Endothelial cell of umbilical vein (primary cell): ENCODE measurements at regions of chr13 and their contacts with region 1.

Region 1: DNA sequence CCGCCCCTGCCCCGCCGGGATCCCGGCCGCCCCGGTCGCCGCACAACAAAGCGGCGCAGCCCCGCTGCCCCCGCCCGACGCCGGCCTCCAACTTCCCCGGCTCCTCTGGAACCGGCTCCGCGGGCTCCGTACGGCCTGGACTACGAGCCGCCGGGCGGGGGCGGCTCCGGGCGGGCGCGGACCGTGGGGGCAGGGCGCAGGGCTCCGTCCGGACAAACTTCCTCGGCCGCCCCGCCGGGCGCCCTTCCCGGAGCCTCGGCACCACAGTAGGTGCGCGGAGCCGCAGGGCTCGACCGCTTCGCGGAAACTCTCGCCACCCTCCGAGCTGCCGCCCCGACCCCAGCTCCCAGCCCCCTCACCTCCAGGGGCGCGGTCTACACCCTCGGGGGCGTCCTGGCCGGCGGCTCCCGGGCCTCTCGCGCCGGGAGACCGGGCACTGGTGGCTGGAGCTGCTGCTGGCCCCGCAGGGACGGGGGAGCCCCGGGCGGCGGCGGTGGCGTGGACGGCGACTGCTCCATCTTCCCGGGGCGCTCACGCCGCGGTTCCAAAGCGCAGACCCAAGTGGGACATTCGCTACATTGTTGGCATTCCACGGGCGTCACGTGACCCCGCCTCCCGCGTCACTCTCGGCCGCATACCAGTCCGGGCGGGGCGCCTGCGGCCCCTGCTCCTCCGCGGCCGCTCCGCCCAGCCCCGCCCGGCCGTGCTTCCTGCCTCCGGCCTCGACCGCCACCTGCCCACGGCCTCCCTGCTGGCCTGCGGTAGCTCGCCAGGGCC is at the start of gene LATS2:
- DNase-seq: peak; percentile 93
- H3K4me3 ChIP-seq: peak within 1 kb of the TSS; percentile 93 to 99 (median 97)
- H3K27ac ChIP-seq: peak within 1 kb of the TSS; percentile 94
- H3K4me1 ChIP-seq: peaks cover 36% of the 10 kb centered on the region
- H3K27me3 ChIP-seq: no peaks in the 10 kb centered on the region
- CTCF ChIP-seq: no peak
- POLR2A ChIP-seq: peak; percentile 90
- total RNA-seq, gene LATS2: 65.7 and 67.6 TPM in 2 replicates

Region 2: GRCh38 chr13:20773194-20774080 is 287.7 kb before region 1 on chr13 and contains the start of gene EEF1AKMT1:
- CTCF ChIA-PET with region 1: no interaction called
- POLR2A ChIA-PET with region 1: no interaction called
- dilution Hi-C with region 1: no loop called
- intact Hi-C with region 1: loop called (anchors 10 kb)
- DNase-seq: peak; percentile 91
- H3K4me3 ChIP-seq: peak within 1 kb of the TSS; percentile 13 to 60 (median 35)
- H3K27ac ChIP-seq: peak within 1 kb of the TSS; percentile 88
- H3K4me1 ChIP-seq: peaks cover 18% of the 10 kb centered on the region
- H3K27me3 ChIP-seq: no peaks in the 10 kb centered on the region
- CTCF ChIP-seq: no peak
- POLR2A ChIP-seq: peak; percentile 56
- total RNA-seq, gene EEF1AKMT1: 8.7 and 11.1 TPM in 2 replicates

Region 3: GRCh38 chr13:20969182-20969581 is 92.0 kb before region 1 on chr13:
- CTCF ChIA-PET with region 1: no interaction called
- POLR2A ChIA-PET with region 1: interaction called, 11 read pairs
- dilution Hi-C with region 1: no loop called
- intact Hi-C with region 1: no loop called
- DNase-seq: peak; percentile 39
- H3K4me3 ChIP-seq: no peak overlapping the region
- H3K27ac ChIP-seq: no peak overlapping the region
- H3K4me1 ChIP-seq: no peaks in the 10 kb centered on the region
- H3K27me3 ChIP-seq: peaks cover 0 to under 1% of the 10 kb centered on the region in 2 experiments
- CTCF ChIP-seq: no peak
- POLR2A ChIP-seq: no peak

Region 4: DNA sequence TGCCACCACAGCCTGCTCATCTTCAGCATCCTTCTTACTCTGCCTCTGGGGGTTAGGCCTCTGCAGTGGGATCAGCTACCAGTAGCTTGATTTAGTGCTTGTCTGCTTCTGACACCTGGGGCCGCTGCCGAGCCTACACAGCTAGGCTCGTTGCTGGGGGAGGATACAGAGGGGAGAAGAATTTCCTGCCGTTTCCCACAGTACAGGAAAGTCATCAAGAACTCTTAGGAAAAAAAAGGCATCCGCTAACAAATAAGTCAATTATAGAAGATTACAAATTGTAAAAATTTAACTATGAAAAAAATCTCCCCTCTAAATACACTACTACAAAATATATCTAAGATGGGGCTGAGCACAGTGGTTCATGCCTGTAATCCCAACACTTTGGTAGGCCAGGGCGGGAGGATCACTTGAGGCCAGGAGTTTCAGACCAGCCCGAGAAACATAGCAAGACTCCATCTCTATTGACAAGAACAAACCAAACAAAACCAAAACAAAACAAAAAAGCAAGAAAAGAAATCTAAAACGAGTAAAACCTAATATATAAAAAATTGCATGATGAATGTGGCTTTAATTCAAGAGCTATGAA is 26.5 kb before region 1 on chr13:
- CTCF ChIA-PET with region 1: interaction called, 22 read pairs
- POLR2A ChIA-PET with region 1: interaction called, 3 read pairs
- dilution Hi-C with region 1: no loop called
- intact Hi-C with region 1: loop called (anchors 1 kb)
- DNase-seq: peak; percentile 71
- H3K4me3 ChIP-seq: no peak overlapping the region
- H3K27ac ChIP-seq: peak overlapping the region; percentile 12
- H3K4me1 ChIP-seq: peaks cover 66% of the 10 kb centered on the region
- H3K27me3 ChIP-seq: no peaks in the 10 kb centered on the region
- CTCF ChIP-seq: peak; percentile 23 to 54
- POLR2A ChIP-seq: no peak

Region 5: GRCh38 chr13:21075011-21075898 is 14.1 kb after region 1 on chr13:
- CTCF ChIA-PET with region 1: interaction called, 9 read pairs
- POLR2A ChIA-PET with region 1: interaction called, 8 read pairs
- dilution Hi-C with region 1: no loop called
- intact Hi-C with region 1: loop called (anchors 1 kb)
- DNase-seq: peak; percentile 59
- H3K4me3 ChIP-seq: peak overlapping the region in 2 of 3 experiments; percentile 51 to 52
- H3K27ac ChIP-seq: peak overlapping the region; percentile 95
- H3K4me1 ChIP-seq: peaks cover 31% of the 10 kb centered on the region
- H3K27me3 ChIP-seq: no peaks in the 10 kb centered on the region
- CTCF ChIP-seq: no peak
- POLR2A ChIP-seq: peak; percentile 76

Region 6: GRCh38 chr13:21522847-21523246 is 461.7 kb after region 1 on chr13:
- CTCF ChIA-PET with region 1: no interaction called
- POLR2A ChIA-PET with region 1: no interaction called
- dilution Hi-C with region 1: no loop called
- intact Hi-C with region 1: no loop called
- DNase-seq: no peak
- H3K4me3 ChIP-seq: no peak overlapping the region
- H3K27ac ChIP-seq: no peak overlapping the region
- H3K4me1 ChIP-seq: no peaks in the 10 kb centered on the region
- H3K27me3 ChIP-seq: no peaks in the 10 kb centered on the region
- CTCF ChIP-seq: no peak
- POLR2A ChIP-seq: no peak